BJ (cell line): ENCODE measurements at regions of chr16 and their contacts with region 1.

Region 1: DNA sequence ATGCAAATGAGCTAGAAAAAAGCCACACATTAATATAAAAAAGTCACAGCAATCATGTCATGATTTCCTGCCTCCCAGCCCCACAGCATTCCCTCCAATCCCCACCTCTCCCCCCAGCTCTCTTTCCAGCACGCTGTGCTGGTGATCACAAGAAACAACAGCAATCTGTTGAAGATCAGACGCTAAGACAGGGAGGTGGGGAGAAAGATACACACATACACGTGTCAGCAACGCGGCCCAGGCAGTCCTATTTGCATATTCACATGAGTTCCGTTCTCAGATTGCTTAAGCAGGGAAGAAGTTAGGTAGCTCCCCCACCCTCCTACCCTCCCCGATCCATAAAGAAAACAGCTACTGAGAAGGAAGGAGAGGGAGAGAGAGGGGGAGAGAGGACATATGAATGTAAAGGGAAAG is 405.5 kb upstream of the PSMD7 start:
- DNase-seq: no peak
- H3K4me3 ChIP-seq: no peak overlapping the region
- H3K27me3 ChIP-seq: no peaks in the 10 kb centered on the region
- CTCF ChIP-seq: no peak

Region 2: GRCh38 chr16:73864868-73865267 is 26.3 kb before region 1 on chr16:
- CTCF ChIA-PET with region 1: no interaction called
- POLR2A ChIA-PET with region 1: no interaction called
- DNase-seq: no peak
- H3K4me3 ChIP-seq: no peak overlapping the region
- H3K27me3 ChIP-seq: no peaks in the 10 kb centered on the region
- CTCF ChIP-seq: no peak

Region 3: DNA sequence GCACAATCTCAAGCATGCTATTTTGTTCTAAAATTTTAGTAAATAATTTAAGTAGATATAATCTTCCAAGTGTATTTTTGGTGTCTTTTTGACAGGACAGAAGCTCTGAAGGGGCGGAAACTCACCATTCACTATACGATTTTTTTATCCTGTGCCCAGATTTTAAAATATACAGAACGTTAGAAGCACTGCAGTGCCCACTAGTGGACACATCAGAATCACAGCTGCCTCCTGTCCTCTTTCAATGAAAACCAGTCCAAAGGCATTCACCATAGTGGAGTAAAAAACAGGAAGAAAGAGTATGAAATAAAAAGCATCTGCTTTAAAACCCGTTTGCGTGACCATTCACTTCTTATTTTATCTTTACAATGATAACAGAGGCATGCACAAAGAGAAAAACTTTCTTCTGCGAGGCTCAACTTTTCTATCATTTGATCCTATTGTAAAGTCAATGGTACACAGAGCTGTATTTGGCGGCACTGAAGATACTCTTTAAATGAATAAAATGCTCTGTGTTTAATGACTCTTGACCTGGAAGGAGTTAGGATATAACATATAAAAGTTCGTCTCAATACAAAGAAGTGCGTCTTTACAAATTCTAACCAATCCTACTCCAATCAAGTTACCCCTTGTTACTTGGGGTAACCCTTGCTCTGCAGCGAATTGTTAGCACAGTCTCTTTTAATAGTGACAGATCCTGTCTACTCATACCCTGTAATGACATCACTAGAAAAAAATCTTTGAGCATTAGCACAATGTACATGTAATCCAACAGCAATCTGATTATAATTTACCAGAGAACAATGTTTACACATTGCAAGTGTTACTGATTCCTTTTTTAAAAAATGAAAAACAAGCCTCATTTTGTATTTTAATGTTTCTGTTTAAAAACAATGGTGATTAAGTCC is 65.7 kb after region 1 on chr16:
- CTCF ChIA-PET with region 1: interaction called, 12 read pairs
- POLR2A ChIA-PET with region 1: no interaction called
- DNase-seq: peak; percentile 9
- H3K4me3 ChIP-seq: no peak overlapping the region
- H3K27me3 ChIP-seq: no peaks in the 10 kb centered on the region
- CTCF ChIP-seq: peak; percentile 88